ENCODE measurements at regions of chr18 and their contacts with region 1.

Region 1: GRCh38 chr18:64037812-64038414 is 68.0 kb downstream of the SERPINB8 start:
- DNase-seq: no peak
- ATAC-seq: peak; percentile 77
- H3K4me3 Mint-ChIP-seq: no peak overlapping the region
- H3K27ac Mint-ChIP-seq: no peak overlapping the region
- H3K4me1 Mint-ChIP-seq: no peaks in the 10 kb centered on the region
- H3K27me3 Mint-ChIP-seq: peaks cover 5% of the 10 kb centered on the region
- CTCF ChIP-seq: peak; percentile 41

Region 2: GRCh38 chr18:64134044-64134747 is 96.3 kb after region 1 on chr18:
- CTCF ChIA-PET with region 1: no interaction called
- POLR2A ChIA-PET with region 1: no interaction called
- DNase-seq: peak; percentile 28
- ATAC-seq: peak; percentile 59; the same call in 1 of the 2 replicates
- H3K4me3 Mint-ChIP-seq: no peak overlapping the region
- H3K27ac Mint-ChIP-seq: peak overlapping the region; percentile 75
- H3K4me1 Mint-ChIP-seq: peaks cover 54% of the 10 kb centered on the region
- H3K27me3 Mint-ChIP-seq: no peaks in the 10 kb centered on the region
- CTCF ChIP-seq: no peak

Region 3: GRCh38 chr18:64165906-64166305 is 128.0 kb after region 1 on chr18:
- CTCF ChIA-PET with region 1: interaction called, 11 read pairs
- POLR2A ChIA-PET with region 1: no interaction called
- DNase-seq: no peak
- ATAC-seq: no peak
- H3K4me3 Mint-ChIP-seq: no peak overlapping the region
- H3K27ac Mint-ChIP-seq: no peak overlapping the region
- H3K4me1 Mint-ChIP-seq: peaks cover 50% of the 10 kb centered on the region
- H3K27me3 Mint-ChIP-seq: no peaks in the 10 kb centered on the region
- CTCF ChIP-seq: no peak

Region 4: GRCh38 chr18:64276311-64277090 is 238.6 kb after region 1 on chr18:
- CTCF ChIA-PET with region 1: no interaction called
- POLR2A ChIA-PET with region 1: no interaction called
- DNase-seq: no peak
- ATAC-seq: no peak
- H3K4me3 Mint-ChIP-seq: no peak overlapping the region
- H3K27ac Mint-ChIP-seq: peak overlapping the region; percentile 21; the same call in 1 of the 2 replicates
- H3K4me1 Mint-ChIP-seq: peaks cover 48% of the 10 kb centered on the region
- H3K27me3 Mint-ChIP-seq: no peaks in the 10 kb centered on the region; the same call in none of the 2 replicates
- CTCF ChIP-seq: no peak

Region 5: DNA sequence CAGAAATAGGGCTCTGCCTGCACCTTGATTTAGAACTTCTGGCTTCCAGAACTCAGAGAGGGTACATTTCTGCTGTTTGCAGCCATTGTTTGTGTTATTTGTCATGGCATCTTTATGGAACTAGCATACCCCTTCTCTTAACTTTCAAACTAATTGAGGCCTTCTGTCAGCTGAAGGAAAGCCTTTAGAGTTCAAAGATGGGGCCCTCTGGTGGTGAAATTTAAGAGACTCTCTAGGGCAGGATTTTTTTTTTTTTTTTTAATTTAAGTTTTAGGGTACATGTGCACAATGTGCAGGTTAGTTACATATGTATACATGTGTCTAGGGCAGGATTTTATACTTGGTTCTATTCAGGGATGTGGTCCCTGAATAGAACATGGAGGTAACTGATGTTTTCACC is 371.6 kb after region 1 on chr18:
- CTCF ChIA-PET with region 1: interaction called, 15 read pairs
- POLR2A ChIA-PET with region 1: no interaction called
- DNase-seq: no peak
- ATAC-seq: no peak; the same call in 1 of the 2 replicates
- H3K4me3 Mint-ChIP-seq: no peak overlapping the region
- H3K27ac Mint-ChIP-seq: no peak overlapping the region
- H3K4me1 Mint-ChIP-seq: peaks cover 16% of the 10 kb centered on the region
- H3K27me3 Mint-ChIP-seq: peaks cover 27% of the 10 kb centered on the region
- CTCF ChIP-seq: peak; percentile 39; the same call in 1 of the 2 replicates